ENCODE measurements at regions of chr5 and their contacts with region 1.

Region 1: DNA sequence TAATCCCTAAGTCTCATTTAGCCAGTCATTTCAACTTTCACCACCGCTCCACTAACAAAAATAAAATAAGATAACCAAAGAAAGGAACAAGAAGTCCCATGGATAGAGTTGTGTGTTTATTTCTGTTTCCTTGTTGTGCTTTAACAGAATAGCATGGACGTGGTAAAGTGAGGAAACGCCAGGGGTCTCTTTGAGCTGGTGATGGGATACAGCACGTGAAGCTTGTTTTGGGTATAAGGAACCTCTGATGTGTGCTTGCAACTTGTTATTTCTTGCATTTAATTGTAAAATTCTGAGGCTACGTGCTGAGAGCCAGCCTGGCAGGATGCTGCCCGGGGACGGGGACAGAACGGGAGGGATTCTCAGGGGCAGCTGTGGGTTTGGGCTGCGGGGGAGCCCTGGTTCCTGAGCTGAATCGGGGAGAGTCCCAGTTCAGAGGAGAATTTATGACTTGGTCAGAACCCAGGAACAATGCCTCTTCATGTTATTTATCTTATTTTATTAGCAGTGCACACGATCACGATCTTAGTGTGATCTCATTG is 63.4 kb downstream of the ANKRD33B start:
- DNase-seq: peak in 1 of 2 experiments; percentile 61
- H3K4me3 ChIP-seq: peak overlapping the region; percentile 21 to 54 (median 46); a peak in 5 of 8 replicates
- H3K27ac ChIP-seq: no peak overlapping the region
- H3K4me1 ChIP-seq: peaks cover 0 to 12% (median 9%) of the 10 kb centered on the region in 4 experiments; a peak in 6 of 7 replicates
- H3K27me3 ChIP-seq: no peaks in the 10 kb centered on the region
- CTCF ChIP-seq: peak in 1 of 3 experiments; percentile 6; a peak in 1 of 4 replicates
- EP300 ChIP-seq: no peak
- POLR2A ChIP-seq: 0 out of 3 replicates have a peak, but pooled peaks of 1 of the 2 experiments have one; percentile 41
- RAD21 ChIP-seq: no peak

Region 2: GRCh38 chr5:10501554-10502075 is 125.6 kb before region 1 on chr5:
- CTCF ChIA-PET with region 1: interaction called, 33 read pairs
- POLR2A ChIA-PET with region 1: no interaction called
- DNase-seq: no peak
- H3K4me3 ChIP-seq: no peak overlapping the region
- H3K27ac ChIP-seq: no peak overlapping the region
- H3K4me1 ChIP-seq: peaks cover 0 to 3% (median 0%) of the 10 kb centered on the region in 4 experiments; a peak in 1 of 7 replicates
- H3K27me3 ChIP-seq: no peaks in the 10 kb centered on the region
- CTCF ChIP-seq: no peak
- EP300 ChIP-seq: no peak
- POLR2A ChIP-seq: no peak
- RAD21 ChIP-seq: no peak

Region 3: GRCh38 chr5:10552183-10553143 is 74.8 kb before region 1 on chr5:
- CTCF ChIA-PET with region 1: interaction called, 33 read pairs
- POLR2A ChIA-PET with region 1: interaction called, 6 read pairs
- DNase-seq: no peak
- H3K4me3 ChIP-seq: no peak overlapping the region
- H3K27ac ChIP-seq: peak overlapping the region; percentile 58; the same call in 1 of the 2 replicates
- H3K4me1 ChIP-seq: peaks cover 9 to 28% (median 11%) of the 10 kb centered on the region in 4 experiments
- H3K27me3 ChIP-seq: no peaks in the 10 kb centered on the region; a peak in 1 of 7 replicates
- CTCF ChIP-seq: no peak
- EP300 ChIP-seq: no peak
- POLR2A ChIP-seq: no peak
- RAD21 ChIP-seq: no peak

Region 4: DNA sequence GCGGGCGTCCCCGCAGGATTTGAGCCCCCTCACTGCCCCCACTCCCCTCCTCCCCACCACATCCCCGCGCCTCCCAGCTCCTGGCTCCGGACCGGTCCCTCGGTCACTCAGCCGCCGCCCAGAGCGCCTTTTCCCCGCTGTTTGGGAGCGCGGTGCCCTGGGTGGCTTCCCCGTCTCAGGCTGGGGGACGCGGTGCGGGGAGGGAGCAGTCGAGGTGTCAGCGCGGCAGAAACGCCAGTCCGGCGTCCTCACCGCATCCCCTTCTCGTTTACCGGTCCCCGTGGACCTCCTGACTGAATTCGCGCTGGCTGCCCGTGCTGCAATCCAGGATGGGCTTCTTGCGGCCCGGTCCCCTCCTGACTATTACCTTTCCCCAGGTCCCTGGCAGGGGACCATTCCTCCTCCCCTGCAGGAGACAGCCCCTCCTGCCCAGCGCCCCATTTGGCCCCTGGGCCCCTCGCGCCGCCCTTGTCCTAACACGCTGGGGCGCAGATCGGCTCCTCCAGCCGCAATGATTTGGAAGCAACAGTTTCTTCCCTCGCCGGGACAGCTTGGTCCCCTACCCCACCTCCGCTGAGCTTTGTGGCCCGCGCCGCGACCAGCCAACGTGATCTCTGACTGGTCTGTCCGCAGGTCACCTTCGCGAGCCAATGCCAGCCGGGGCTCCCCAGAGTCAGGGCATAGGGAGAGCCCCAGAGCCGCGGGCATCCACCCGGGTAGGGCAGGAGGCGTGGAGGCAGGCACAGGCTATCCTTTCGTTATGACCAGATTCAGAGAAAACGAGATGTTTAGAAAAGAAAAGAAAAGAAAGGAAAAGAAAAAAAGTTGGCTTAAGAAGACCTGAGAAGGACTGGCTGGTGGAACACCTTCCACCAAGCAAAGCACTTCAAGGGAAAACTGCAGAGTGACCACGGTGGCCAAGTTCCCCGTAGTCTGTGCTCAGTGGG is 62.1 kb before region 1 on chr5:
- CTCF ChIA-PET with region 1: interaction called, 15 read pairs
- POLR2A ChIA-PET with region 1: interaction called, 7 read pairs
- DNase-seq: peak in 1 of 2 experiments; percentile 69
- H3K4me3 ChIP-seq: peak overlapping the region; percentile 53 to 74 (median 66)
- H3K27ac ChIP-seq: no peak overlapping the region
- H3K4me1 ChIP-seq: peaks cover 8 to 13% (median 10%) of the 10 kb centered on the region in 4 experiments
- H3K27me3 ChIP-seq: peaks cover 20 to 59% (median 55%) of the 10 kb centered on the region in 4 experiments
- CTCF ChIP-seq: no peak
- EP300 ChIP-seq: no peak
- POLR2A ChIP-seq: no peak
- RAD21 ChIP-seq: no peak

Region 5: GRCh38 chr5:10607666-10608073 is 19.6 kb before region 1 on chr5:
- CTCF ChIA-PET with region 1: interaction called, 53 read pairs
- POLR2A ChIA-PET with region 1: interaction called, 8 read pairs
- DNase-seq: no peak
- H3K4me3 ChIP-seq: no peak overlapping the region; a peak in 1 of 8 replicates
- H3K27ac ChIP-seq: no peak overlapping the region
- H3K4me1 ChIP-seq: peaks cover 4 to 31% (median 15%) of the 10 kb centered on the region in 4 experiments; a peak in 6 of 7 replicates
- H3K27me3 ChIP-seq: no peaks in the 10 kb centered on the region
- CTCF ChIP-seq: peak in 2 of 3 experiments; percentile 7 to 35; a peak in 2 of 4 replicates
- EP300 ChIP-seq: no peak
- POLR2A ChIP-seq: no peak
- RAD21 ChIP-seq: peak in 1 of 2 experiments; percentile 37; a peak in 3 of 4 replicates

Region 6: GRCh38 chr5:10689391-10690081 is 62.3 kb after region 1 on chr5:
- CTCF ChIA-PET with region 1: interaction called, 38 read pairs
- POLR2A ChIA-PET with region 1: interaction called, 3 read pairs
- DNase-seq: peak in 1 of 2 experiments; percentile 87
- H3K4me3 ChIP-seq: no peak overlapping the region
- H3K27ac ChIP-seq: peak overlapping the region; percentile 32; the same call in 1 of the 2 replicates
- H3K4me1 ChIP-seq: peaks cover 0 to 14% (median 5%) of the 10 kb centered on the region in 4 experiments; a peak in 6 of 7 replicates
- H3K27me3 ChIP-seq: no peaks in the 10 kb centered on the region
- CTCF ChIP-seq: peak; percentile 73 to 91 (median 83)
- EP300 ChIP-seq: no peak
- POLR2A ChIP-seq: no peak
- RAD21 ChIP-seq: peak; percentile 90 to 93

Measured in H1 (cell line).